WTC11 (cell line): ENCODE measurements at regions of chr3 and their contacts with region 1.

Region 1: DNA sequence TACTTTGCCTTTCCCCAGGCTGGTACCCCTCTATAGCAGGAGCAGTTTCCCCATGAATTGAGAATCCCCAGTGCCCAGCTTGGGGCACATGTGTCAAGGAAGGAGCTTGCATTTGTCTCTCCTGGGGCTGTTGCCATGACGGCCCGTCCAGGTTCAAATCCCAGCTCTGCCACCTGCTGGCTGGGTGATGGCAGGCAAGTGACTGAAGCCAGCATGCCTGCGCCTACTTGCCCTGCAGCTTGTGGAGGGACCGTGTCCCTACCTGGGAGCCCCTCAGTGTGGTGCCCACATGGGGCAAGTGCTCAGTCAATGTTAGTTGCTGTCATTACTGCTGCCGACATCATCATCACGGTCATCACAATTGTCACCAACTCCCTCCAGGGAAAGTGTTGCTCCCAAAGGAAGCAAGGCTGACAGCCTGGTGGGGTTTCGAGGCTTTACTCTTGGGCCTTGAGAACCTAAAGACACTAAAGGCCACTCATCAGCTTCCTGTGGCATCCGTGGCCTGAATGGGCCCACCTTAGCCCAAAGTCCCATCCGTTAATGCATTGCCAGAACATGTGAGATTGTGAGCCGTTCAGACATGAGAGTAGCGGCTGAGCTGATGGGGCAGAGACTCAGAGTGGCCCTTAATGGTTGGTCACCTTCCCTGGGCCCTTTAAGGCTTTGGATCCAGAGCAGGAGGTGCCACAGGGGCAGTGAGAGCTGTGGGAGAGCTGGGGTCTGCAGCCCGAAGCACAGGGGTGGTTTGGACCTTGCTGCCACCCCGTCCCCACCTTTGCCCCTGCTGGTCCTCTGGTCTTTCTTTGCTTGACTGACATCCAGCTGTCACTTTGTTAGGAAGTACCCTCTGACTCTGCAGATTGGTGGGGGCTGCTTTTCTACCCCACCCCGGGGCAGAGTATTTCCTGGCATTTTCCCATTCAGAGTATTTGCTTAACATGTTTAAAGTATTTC is 144.3 kb downstream of the DNAJB8 start:
- DNase-seq: peak; percentile 78
- ATAC-seq: peak; percentile 79
- H3K4me3 Mint-ChIP-seq: no peak overlapping the region
- H3K27ac Mint-ChIP-seq: no peak overlapping the region
- H3K4me1 Mint-ChIP-seq: no peaks in the 10 kb centered on the region
- H3K27me3 Mint-ChIP-seq: no peaks in the 10 kb centered on the region
- CTCF ChIP-seq: peak; percentile 53; the same call in 1 of the 2 replicates

Region 2: GRCh38 chr3:128060473-128061381 is 261.6 kb before region 1 on chr3:
- CTCF ChIA-PET with region 1: no interaction called
- POLR2A ChIA-PET with region 1: no interaction called
- DNase-seq: no peak
- ATAC-seq: no peak
- H3K4me3 Mint-ChIP-seq: no peak overlapping the region
- H3K27ac Mint-ChIP-seq: no peak overlapping the region
- H3K4me1 Mint-ChIP-seq: peaks cover 4% of the 10 kb centered on the region; the same call in 1 of the 2 replicates
- H3K27me3 Mint-ChIP-seq: no peaks in the 10 kb centered on the region
- CTCF ChIP-seq: no peak

Region 3: GRCh38 chr3:128226795-128227395 is 95.4 kb before region 1 on chr3:
- CTCF ChIA-PET with region 1: interaction called, 52 read pairs
- POLR2A ChIA-PET with region 1: no interaction called
- DNase-seq: peak; percentile 78
- ATAC-seq: peak; percentile 93
- H3K4me3 Mint-ChIP-seq: no peak overlapping the region
- H3K27ac Mint-ChIP-seq: no peak overlapping the region
- H3K4me1 Mint-ChIP-seq: peaks cover 34% of the 10 kb centered on the region
- H3K27me3 Mint-ChIP-seq: no peaks in the 10 kb centered on the region
- CTCF ChIP-seq: peak; percentile 83

Region 4: DNA sequence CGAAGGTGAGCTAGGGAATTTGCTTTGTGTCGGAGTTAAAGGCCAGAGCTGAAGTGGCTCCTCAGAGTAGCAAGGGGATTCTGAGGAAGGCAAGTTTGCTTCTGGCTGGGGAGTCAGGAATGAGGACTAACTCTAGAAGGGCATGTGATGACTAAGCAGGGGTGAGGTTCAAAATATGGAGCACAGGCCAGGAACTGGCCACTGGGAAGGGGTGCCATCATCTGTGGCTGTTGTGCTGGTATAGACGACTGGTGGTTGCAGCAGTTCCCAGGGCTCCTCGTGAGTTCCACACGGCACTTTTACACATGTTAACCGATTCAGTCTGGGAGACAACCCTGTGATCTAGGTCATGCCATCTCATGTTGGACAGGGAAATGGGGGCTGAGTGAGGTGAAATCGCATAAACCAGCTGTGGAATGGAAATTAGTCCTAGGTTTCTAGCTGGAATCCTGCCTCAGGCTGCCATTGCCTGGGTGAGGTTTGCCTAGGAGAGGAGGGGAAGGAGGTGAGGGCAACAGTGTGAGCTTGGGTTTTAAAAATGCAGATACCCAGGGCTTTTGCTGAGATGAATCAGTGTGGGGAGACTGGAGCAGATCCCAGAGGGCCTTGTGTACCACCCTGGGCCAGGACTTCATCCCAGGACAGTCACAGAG is 68.1 kb before region 1 on chr3:
- CTCF ChIA-PET with region 1: interaction called, 13 read pairs
- POLR2A ChIA-PET with region 1: no interaction called
- DNase-seq: no peak
- ATAC-seq: no peak
- H3K4me3 Mint-ChIP-seq: no peak overlapping the region
- H3K27ac Mint-ChIP-seq: no peak overlapping the region; the same call in 1 of the 2 replicates
- H3K4me1 Mint-ChIP-seq: peaks cover 17% of the 10 kb centered on the region
- H3K27me3 Mint-ChIP-seq: no peaks in the 10 kb centered on the region; the same call in 1 of the 2 replicates
- CTCF ChIP-seq: no peak

Region 5: DNA sequence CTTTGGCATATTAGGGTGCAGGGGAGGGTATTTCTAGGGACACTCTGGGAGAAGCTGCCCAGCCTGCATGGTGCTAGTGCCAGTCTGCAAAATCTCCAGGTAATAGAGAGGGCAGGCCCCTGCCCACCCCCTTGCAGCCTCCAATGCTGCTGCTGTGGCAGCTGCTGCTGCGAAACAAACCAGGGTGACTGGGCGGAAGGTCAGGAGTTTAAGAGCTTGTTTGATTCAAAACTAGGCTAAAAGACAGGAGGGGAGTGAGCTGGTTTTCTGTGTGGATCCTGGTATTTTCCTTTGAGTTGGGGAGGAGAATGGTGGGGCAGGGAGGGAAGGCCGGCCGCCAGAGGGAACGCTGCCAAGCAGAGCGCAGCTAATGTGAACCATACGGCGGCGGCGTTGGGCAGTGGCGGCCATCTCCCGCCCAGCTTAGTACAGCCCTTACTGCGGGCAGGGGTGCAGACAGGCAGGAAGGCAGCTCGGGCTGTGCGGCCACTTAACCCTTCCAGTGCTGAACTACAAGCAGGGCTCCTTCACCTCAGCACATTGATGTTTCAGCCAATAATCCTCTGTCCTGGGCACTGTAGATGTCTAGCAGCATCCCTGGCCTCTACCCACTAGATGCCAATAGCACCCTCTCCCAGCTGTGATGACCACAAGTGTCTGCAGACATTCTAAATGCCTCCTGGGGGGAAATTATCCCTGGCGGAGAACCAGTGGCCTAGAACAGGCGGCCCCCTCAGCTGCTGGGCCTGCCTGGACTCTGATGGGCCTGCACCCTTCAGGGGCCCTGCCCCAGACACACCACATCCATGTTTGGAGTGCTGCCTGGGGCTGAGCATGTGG is 43.4 kb before region 1 on chr3:
- CTCF ChIA-PET with region 1: interaction called, 60 read pairs
- POLR2A ChIA-PET with region 1: interaction called, 3 read pairs
- DNase-seq: peak; percentile 38
- ATAC-seq: peak; percentile 16
- H3K4me3 Mint-ChIP-seq: no peak overlapping the region; the same call in 1 of the 2 replicates
- H3K27ac Mint-ChIP-seq: no peak overlapping the region; the same call in 1 of the 2 replicates
- H3K4me1 Mint-ChIP-seq: peaks cover 94% of the 10 kb centered on the region
- H3K27me3 Mint-ChIP-seq: peaks cover 57% of the 10 kb centered on the region
- CTCF ChIP-seq: no peak

Region 6: DNA sequence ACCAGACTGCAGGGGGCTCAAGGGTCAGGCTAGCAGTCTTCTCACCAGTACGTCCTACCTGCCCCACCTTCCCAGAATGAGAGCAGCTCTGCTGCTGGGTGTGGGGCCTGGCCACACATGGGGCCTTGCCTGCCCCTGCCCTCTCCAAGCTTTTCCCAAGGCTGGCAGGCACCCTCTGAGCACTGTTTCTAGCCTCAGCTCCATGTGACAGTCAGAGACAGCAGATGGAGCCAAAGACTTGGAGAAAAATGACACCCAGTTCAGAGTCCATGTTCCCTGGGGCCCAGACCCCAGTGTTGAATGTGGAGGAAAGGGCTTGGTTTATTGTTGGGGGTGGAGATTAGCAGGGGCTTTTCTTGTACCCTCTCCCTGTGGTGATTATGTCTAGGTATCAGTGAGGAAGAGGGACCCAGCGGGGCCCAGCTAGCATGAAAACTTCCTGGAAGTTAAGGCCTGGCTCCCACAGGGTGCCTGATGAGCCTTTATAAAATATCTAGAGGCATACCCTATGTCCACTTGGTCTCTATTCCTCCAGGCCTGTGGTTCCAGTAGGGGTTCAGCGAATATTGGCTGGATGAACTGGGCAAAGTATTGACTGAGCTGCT is 15.2 kb before region 1 on chr3:
- CTCF ChIA-PET with region 1: interaction called, 17 read pairs
- POLR2A ChIA-PET with region 1: interaction called, 3 read pairs
- DNase-seq: no peak
- ATAC-seq: peak; percentile 58
- H3K4me3 Mint-ChIP-seq: no peak overlapping the region
- H3K27ac Mint-ChIP-seq: no peak overlapping the region
- H3K4me1 Mint-ChIP-seq: peaks cover 10% of the 10 kb centered on the region
- H3K27me3 Mint-ChIP-seq: no peaks in the 10 kb centered on the region
- CTCF ChIP-seq: no peak